ENCODE measurements at regions of chr1 and their contacts with region 1.

Region 1: DNA sequence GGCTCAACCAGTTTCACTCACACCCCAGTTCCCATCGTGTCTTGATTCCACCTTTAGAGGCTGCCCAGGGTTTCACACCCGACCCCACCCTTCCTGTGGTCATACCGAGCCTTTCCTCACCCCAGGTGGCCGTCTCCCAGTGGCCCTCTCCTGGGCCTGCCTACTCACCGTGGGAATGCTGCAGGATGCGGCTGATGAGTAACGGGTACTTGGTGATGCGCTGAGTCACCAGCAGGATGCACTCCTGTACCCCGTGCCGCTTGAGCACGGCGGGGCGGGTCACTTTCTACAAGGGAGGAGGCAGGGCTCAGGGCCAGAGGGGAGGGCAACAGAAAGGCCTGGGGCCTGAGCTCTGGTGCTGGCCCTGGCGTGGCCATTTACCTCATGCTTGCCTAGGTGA is 16.4 kb downstream of the ARHGEF2 start:
- DNase-seq: peak in 1 of 35 experiments; percentile 34
- ATAC-seq: peak in 2 of 4 experiments; percentile 34 to 62
- H3K4me3 ChIP-seq: no peak overlapping the region
- H3K4me3 Mint-ChIP-seq: no peak overlapping the region
- H3K27ac ChIP-seq: peak overlapping the region; percentile 45
- H3K27ac Mint-ChIP-seq: peak overlapping the region; percentile 58 to 83
- H3K4me1 ChIP-seq: peaks cover under 1 to 26% of the 10 kb centered on the region in 2 experiments
- H3K4me1 Mint-ChIP-seq: peaks cover 11 to 37% (median 14%) of the 10 kb centered on the region in 3 donors
- H3K27me3 ChIP-seq: no peaks in the 10 kb centered on the region
- H3K27me3 Mint-ChIP-seq: no peaks in the 10 kb centered on the region

Region 2: GRCh38 chr1:155741908-155742307 is 220.0 kb before region 1 on chr1:
- CTCF ChIA-PET with region 1: interaction called in 1 of 2 experiments, 10 read pairs
- POLR2A ChIA-PET with region 1: no interaction called
- DNase-seq: no peak
- ATAC-seq: no peak
- H3K4me3 ChIP-seq: no peak overlapping the region
- H3K4me3 Mint-ChIP-seq: no peak overlapping the region
- H3K27ac ChIP-seq: no peak overlapping the region
- H3K27ac Mint-ChIP-seq: no peak overlapping the region
- H3K4me1 ChIP-seq: peaks cover 5% of the 10 kb centered on the region in 2 experiments
- H3K4me1 Mint-ChIP-seq: peaks cover 0 to 7% (median 7%) of the 10 kb centered on the region in 3 donors
- H3K27me3 ChIP-seq: no peaks in the 10 kb centered on the region
- H3K27me3 Mint-ChIP-seq: no peaks in the 10 kb centered on the region

Region 3: GRCh38 chr1:155911156-155912055 is 50.5 kb before region 1 on chr1 and contains the start of gene RIT1:
- CTCF ChIA-PET with region 1: no interaction called
- POLR2A ChIA-PET with region 1: no interaction called
- DNase-seq: peak; percentile 62 to 91 (median 78)
- ATAC-seq: peak; percentile 96 to 99 (median 98)
- H3K4me3 ChIP-seq: peak within 1 kb of the TSS; percentile 77 to 90
- H3K4me3 Mint-ChIP-seq: peak within 1 kb of the TSS; percentile 93 to 98 (median 97)
- H3K27ac ChIP-seq: peak within 1 kb of the TSS; percentile 78
- H3K27ac Mint-ChIP-seq: peak within 1 kb of the TSS; percentile 95 to 97
- H3K4me1 ChIP-seq: peaks cover 11 to 24% of the 10 kb centered on the region in 2 experiments
- H3K4me1 Mint-ChIP-seq: peaks cover 24 to 31% (median 26%) of the 10 kb centered on the region in 3 donors
- H3K27me3 ChIP-seq: no peaks in the 10 kb centered on the region
- H3K27me3 Mint-ChIP-seq: no peaks in the 10 kb centered on the region
- total RNA-seq, gene RIT1: 35.3 to 56.4 (median 39.2) TPM

Region 4: GRCh38 chr1:155951753-155952504 is 10.0 kb before region 1 on chr1:
- CTCF ChIA-PET with region 1: no interaction called
- POLR2A ChIA-PET with region 1: interaction called in 1 of 2 experiments, 12 read pairs
- DNase-seq: no peak
- ATAC-seq: no peak
- H3K4me3 ChIP-seq: no peak overlapping the region
- H3K4me3 Mint-ChIP-seq: no peak overlapping the region
- H3K27ac ChIP-seq: no peak overlapping the region
- H3K27ac Mint-ChIP-seq: peak overlapping the region in 1 of 2 donors; percentile 12
- H3K4me1 ChIP-seq: peaks cover under 1 to 10% of the 10 kb centered on the region in 2 experiments
- H3K4me1 Mint-ChIP-seq: peaks cover 4 to 12% (median 9%) of the 10 kb centered on the region in 3 donors
- H3K27me3 ChIP-seq: no peaks in the 10 kb centered on the region
- H3K27me3 Mint-ChIP-seq: no peaks in the 10 kb centered on the region